ENCODE measurements at regions of chr6 and their contacts with region 1.

Region 1: GRCh38 chr6:24520929-24521546 is 26.3 kb downstream of the ALDH5A1 start:
- DNase-seq: peak; percentile 8
- H3K4me3 ChIP-seq: no peak overlapping the region
- H3K27ac ChIP-seq: no peak overlapping the region
- H3K4me1 ChIP-seq: no peaks in the 10 kb centered on the region
- H3K27me3 ChIP-seq: no peaks in the 10 kb centered on the region
- CTCF ChIP-seq: peak; percentile 68 to 87

Region 2: GRCh38 chr6:24283043-24283985 is 237.7 kb before region 1 on chr6:
- CTCF ChIA-PET with region 1: no interaction called
- dilution Hi-C with region 1: no loop called
- in situ Hi-C with region 1: no loop called
- intact Hi-C with region 1: loop called (anchors 1 kb)
- DNase-seq: peak; percentile 63
- H3K4me3 ChIP-seq: no peak overlapping the region
- H3K27ac ChIP-seq: no peak overlapping the region
- H3K4me1 ChIP-seq: peaks cover 7% of the 10 kb centered on the region
- H3K27me3 ChIP-seq: no peaks in the 10 kb centered on the region
- CTCF ChIP-seq: peak; percentile 64 to 77

Region 3: DNA sequence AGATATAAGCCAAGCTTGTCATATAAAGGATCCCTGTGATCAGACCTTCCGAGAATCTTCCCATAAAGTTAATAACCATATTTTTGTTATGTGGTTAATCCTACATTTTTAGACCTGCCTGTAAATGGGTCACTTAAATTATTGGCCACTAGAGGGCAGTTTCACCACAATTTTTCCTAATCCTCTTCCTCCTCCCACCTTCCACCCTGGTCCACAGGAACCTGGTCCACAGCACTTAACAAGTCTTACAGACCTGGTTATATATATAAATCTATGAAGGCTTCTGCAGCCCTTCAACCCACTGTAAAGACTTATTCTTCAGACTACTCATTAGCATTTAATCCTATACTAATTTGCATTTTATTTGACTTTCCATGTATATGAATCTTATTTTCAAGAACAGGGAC is 90.0 kb before region 1 on chr6:
- CTCF ChIA-PET with region 1: no interaction called
- dilution Hi-C with region 1: no loop called
- in situ Hi-C with region 1: no loop called
- intact Hi-C with region 1: loop called (anchors 1 kb)
- DNase-seq: peak; percentile 20
- H3K4me3 ChIP-seq: no peak overlapping the region
- H3K27ac ChIP-seq: no peak overlapping the region
- H3K4me1 ChIP-seq: no peaks in the 10 kb centered on the region
- H3K27me3 ChIP-seq: no peaks in the 10 kb centered on the region
- CTCF ChIP-seq: peak; percentile 56 to 66

Region 4: DNA sequence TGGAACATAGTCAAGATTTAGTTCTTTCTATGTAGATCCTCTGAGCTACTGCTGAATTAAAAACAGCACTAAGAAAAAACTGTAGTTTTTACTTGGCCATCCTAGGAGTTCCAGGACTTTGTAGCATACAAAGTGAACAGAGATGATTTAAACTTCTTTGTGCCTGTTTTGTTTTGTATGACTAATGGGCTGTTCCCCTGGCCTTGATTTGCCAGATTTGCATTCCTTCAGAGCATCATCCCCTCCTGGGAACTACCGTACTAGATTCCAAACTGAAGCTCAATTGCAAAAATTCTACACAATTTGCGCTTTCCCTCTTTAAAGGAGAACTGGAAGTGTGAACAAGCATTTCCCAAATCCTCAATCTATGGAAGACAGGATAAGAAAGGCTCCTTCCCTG is 168.9 kb after region 1 on chr6:
- CTCF ChIA-PET with region 1: no interaction called
- dilution Hi-C with region 1: no loop called
- in situ Hi-C with region 1: no loop called
- intact Hi-C with region 1: loop called (anchors 1 kb)
- DNase-seq: no peak
- H3K4me3 ChIP-seq: no peak overlapping the region
- H3K27ac ChIP-seq: no peak overlapping the region
- H3K4me1 ChIP-seq: no peaks in the 10 kb centered on the region
- H3K27me3 ChIP-seq: no peaks in the 10 kb centered on the region
- CTCF ChIP-seq: no peak

Region 5: GRCh38 chr6:24766680-24767462 is 245.8 kb after region 1 on chr6:
- CTCF ChIA-PET with region 1: no interaction called
- dilution Hi-C with region 1: no loop called
- in situ Hi-C with region 1: no loop called
- intact Hi-C with region 1: loop called (anchors 2 kb)
- DNase-seq: peak; percentile 20
- H3K4me3 ChIP-seq: no peak overlapping the region
- H3K27ac ChIP-seq: no peak overlapping the region
- H3K4me1 ChIP-seq: peaks cover 4% of the 10 kb centered on the region
- H3K27me3 ChIP-seq: no peaks in the 10 kb centered on the region
- CTCF ChIP-seq: peak; percentile 39 to 49

Region 6: DNA sequence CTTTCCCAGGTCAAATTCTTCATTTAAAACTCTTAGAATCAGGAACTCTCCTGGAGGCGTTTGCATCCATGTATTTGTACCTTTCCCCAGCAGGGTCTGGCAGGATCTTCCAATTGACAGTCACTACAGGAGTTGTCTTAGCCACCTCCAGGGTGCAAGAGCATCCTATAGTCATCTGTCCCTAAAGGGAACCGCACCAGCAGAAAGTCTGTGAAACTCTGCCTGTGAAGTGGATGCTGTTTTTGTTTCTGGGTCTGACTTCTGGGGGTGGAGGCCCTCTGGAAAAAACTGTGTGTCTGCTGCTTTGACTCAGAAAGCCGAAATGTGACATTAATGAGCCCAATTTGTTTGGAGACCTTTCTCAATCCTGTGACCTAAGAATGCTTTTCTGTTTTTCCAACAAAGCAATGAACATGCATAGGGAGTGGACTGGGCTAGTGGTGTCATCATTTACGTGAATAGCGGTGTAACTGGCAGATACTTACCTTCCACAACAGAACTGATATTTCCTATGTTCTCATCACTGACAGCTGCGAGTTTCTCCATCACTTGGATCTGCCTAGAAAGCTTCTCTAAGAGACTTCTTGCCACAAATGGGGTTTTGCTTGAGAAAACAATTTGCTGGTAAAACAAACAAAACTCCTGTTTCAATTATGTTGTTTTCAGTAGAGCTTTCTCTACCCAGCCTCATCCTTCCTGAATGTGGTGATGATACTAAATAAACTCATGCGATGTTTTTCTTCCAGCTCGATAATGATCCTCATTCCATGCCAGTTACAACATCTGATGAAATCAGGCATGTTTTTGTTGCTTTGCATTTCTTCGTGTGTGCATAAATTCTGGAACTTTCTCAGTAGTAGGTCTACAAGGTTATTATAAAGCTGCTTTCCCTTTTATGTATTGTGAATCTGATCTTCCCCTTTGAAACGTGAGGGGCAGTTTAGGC is 311.0 kb after region 1 on chr6:
- CTCF ChIA-PET with region 1: no interaction called
- dilution Hi-C with region 1: no loop called
- in situ Hi-C with region 1: no loop called
- intact Hi-C with region 1: loop called (anchors 10 kb)
- DNase-seq: no peak
- H3K4me3 ChIP-seq: no peak overlapping the region
- H3K27ac ChIP-seq: no peak overlapping the region
- H3K4me1 ChIP-seq: peaks cover 14% of the 10 kb centered on the region
- H3K27me3 ChIP-seq: no peaks in the 10 kb centered on the region
- CTCF ChIP-seq: no peak